Activated T-helper 1 cell treated with anti-CD3 and anti-CD28 coated beads, Interleukin-12 subunit alpha, Interleukin-12 subunit beta, Interleukin-2, Interleukin-4 antibody, amounts not matched to agents 30 ng/mL and 10 ng/mL and 1 ng/mL, durations not matched to agents 14 hours and 24 hours and 36 hours (primary cell): ENCODE measurements at regions of chr4 and their contacts with region 1.

Region 1: DNA sequence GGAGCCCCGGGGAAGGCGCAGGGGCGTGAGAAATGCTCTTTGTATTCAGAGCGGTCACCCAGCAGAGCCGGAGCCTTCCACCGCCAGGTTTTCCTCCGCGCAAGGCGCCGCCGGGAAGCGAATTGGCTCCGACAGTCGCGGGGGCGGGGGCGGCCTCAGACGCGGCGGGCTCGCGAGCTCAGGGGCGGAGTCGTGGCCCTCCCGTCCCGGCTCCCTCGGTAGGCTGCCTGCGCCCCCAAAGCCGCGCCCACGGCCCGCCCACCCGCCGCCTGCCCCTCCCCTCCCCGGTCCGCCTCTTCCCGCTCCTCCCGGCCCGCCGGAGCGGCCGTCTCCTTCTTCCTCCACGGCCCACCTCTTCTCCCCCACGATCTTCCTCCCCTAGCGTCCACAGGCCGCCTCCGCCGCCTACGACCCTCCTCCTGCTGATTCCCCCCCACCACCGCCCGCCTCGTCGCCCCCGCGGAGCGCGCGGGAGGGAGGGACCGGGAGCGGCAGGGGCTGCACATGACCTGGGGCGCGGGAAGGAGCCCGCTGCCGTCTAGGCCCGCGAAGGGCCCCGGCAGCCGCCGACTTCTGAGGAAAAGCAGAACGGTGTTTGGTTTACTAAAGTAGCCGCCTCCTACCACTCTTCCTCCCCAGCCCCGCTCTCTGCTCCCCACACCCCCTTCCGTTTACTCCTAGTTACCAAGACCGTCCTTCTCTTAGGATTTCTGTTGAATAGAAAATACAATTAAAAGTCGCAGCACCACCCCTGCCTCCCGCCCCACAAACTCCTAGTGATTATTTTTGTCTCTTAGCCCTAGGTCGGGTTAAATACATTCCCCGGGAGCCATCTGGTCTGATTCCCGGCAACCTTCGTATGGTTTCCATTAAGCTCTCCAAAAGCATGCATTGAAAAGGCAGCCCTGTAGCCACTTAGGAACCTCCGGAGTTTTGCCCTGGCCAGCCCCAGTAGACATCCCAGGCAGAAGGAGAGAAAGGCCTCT is 53.2 kb downstream of the C4orf51 start:
- DNase-seq: peak; percentile 82
- H3K4me3 Mint-ChIP-seq: peak overlapping the region; percentile 79
- H3K27ac Mint-ChIP-seq: peak overlapping the region; percentile 24
- H3K4me1 Mint-ChIP-seq: peaks cover 10% of the 10 kb centered on the region
- H3K27me3 Mint-ChIP-seq: peaks cover 3% of the 10 kb centered on the region

Region 2: DNA sequence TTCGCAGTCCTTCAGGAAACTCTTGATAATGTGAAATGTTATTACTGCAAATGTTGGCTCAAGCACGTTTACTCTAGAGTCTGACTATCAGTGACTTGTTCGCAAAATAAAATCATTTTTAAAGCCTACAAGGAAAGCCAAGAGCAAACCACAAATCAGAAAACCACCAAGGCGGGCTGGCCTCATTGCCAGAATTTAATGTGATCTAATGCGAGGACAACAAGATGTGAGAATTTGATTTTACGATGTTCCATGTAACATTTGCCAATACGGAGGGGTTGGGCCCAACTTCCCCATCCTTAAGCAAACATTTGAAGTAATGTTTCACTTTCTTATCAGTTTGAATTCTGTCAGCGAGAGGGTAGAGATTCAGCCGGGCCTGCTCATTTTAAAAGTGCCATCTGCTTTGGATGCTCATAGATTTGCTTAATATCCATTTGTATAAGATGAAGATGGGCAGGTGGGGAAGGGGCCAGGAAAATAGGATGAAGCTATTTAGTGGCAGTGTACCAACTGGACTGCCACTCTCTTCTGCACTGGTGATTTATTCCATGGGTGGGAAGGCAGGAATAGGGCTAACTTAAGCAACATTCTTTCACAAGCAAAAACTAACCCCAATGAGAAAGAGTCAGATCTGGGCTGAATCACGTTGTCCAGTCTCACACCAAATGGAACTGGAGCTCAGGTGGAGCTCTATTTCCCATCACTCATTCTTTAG is 860.5 kb before region 1 on chr4:
- intact Hi-C with region 1: no loop called
- DNase-seq: no peak
- H3K4me3 Mint-ChIP-seq: no peak overlapping the region
- H3K27ac Mint-ChIP-seq: no peak overlapping the region
- H3K4me1 Mint-ChIP-seq: no peaks in the 10 kb centered on the region
- H3K27me3 Mint-ChIP-seq: no peaks in the 10 kb centered on the region

Region 3: DNA sequence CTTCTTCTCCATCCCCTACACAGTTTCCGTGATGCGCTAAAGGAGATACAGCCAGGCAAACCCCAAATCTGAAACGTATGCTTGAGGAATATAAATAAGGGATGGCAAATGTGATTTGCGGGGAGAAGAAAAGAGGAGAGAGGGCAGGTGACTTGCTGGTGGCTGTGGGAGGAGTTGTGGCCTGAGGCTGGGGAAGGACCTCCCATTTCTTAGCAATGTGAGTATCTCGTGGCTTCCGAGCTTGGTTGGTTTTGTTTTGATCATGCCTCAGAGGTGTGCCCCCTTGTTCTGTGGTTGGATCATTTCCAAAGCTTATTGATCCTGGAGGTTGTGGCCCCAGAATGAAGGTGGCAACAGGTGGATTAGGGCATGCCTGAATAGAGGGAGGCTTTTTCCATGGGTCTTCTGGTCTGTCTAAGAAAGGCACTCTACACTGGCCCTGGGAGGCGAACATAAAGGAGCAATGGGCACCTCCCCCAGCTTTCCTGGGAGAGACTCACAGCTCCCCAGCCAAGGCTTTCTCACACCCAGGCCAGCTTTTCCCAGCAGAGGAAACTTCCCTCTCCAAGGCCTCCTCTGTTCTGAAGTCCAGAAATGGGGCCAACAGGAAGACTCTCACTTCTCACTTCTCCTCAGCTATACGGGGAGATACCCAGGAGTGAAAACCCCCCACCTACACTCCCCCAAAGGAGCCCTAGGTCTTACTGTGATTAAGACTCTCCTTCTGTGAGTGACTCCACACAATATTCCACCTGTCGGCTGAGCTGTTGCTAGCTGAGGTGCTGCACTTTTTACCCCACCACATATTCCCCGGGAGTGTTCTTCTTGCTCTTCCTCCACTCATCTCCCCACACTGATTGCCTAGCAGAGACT is 13.2 kb before region 1 on chr4:
- intact Hi-C with region 1: loop called (anchors 1 kb)
- DNase-seq: no peak
- H3K4me3 Mint-ChIP-seq: no peak overlapping the region
- H3K27ac Mint-ChIP-seq: peak overlapping the region; percentile 13
- H3K4me1 Mint-ChIP-seq: peaks cover 15% of the 10 kb centered on the region
- H3K27me3 Mint-ChIP-seq: peaks cover 2% of the 10 kb centered on the region

Region 4: DNA sequence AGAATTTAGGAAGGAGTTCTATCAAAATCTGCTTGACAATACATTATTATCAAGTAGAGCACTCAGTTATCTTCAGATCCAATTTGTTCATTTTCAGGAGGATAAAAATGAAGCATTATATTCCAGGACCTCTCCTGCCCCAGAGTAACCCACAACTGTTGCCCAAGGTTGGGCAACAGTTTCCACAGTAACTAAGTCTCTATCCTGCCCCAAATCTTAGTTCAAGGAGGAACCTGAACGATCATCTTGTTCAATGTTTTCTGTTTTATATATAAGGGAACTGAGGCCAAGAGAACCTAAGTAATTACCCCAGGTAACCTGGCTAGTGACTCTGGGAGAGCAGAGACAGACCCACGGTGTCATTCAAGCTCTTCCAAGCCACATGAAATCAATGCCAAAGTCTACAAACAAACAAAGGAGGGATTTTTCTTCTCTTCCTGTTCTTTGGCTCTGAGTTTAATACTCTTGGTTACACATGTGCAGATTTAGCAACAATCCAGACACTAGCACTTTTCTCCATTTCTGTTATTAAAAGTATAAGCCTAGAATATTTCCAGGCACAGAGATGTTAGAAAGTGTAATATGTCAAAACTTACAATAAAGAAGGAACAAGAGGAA is 52.3 kb after region 1 on chr4:
- intact Hi-C with region 1: loop called (anchors 2 kb)
- DNase-seq: no peak
- H3K4me3 Mint-ChIP-seq: no peak overlapping the region
- H3K27ac Mint-ChIP-seq: peak overlapping the region; percentile 72
- H3K4me1 Mint-ChIP-seq: peaks cover 49% of the 10 kb centered on the region
- H3K27me3 Mint-ChIP-seq: no peaks in the 10 kb centered on the region